Activated CD4-positive, alpha-beta memory T cell treated with anti-CD3 and anti-CD28 coated beads for 36 hours (primary cell): ENCODE measurements at regions of chrX and their contacts with region 1.

Region 1: GRCh38 chrX:104113222-104113965 is 1.1 kb downstream of the ZCCHC18 start:
- DNase-seq: peak; percentile 70
- H3K4me3 Mint-ChIP-seq: peak overlapping the region; percentile 79
- H3K27ac Mint-ChIP-seq: peak overlapping the region; percentile 49
- H3K4me1 Mint-ChIP-seq: peaks cover 44% of the 10 kb centered on the region
- H3K27me3 Mint-ChIP-seq: no peaks in the 10 kb centered on the region

Region 2: GRCh38 chrX:103533511-103534216 is 579.7 kb before region 1 on chrX:
- CTCF ChIA-PET with region 1: no interaction called
- POLR2A ChIA-PET with region 1: no interaction called
- intact Hi-C with region 1: loop called (anchors 5 kb)
- DNase-seq: peak; percentile 76
- H3K4me3 Mint-ChIP-seq: no peak overlapping the region
- H3K27ac Mint-ChIP-seq: no peak overlapping the region
- H3K4me1 Mint-ChIP-seq: peaks cover 3% of the 10 kb centered on the region
- H3K27me3 Mint-ChIP-seq: no peaks in the 10 kb centered on the region

Region 3: DNA sequence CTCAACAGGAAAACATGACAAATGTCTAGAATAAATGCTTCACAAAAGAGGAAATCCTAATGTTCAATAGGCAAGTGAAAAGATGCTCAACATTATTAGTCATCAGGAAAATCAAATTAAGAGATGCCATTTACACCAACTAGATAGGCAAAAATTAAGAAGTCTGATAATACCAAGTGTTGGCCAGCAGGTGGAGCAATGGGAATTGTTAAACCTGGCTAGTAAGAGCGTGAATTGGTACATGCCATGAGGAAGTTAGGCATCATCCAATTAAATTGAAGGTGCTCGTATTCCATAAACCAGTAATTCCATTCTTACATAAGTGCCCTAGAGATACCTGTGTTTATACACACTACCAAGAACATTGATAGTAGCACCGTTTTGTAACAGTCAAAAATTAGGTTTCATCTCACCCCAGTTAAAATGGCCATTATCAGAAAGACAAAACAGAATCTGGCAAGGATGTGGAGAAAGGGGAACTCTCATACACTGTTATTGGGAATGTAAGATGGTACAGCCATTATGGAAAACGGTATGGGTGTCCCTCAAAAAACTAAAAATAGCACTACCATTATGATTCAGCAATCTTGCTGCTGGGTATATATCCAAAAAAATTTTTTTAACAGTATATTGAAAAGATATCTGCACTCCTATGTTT is 15.1 kb before region 1 on chrX:
- CTCF ChIA-PET with region 1: interaction called, 25 read pairs
- POLR2A ChIA-PET with region 1: interaction called, 3 read pairs
- intact Hi-C with region 1: loop called (anchors 1 kb)
- DNase-seq: peak; percentile 48
- H3K4me3 Mint-ChIP-seq: no peak overlapping the region
- H3K27ac Mint-ChIP-seq: no peak overlapping the region
- H3K4me1 Mint-ChIP-seq: peaks cover 2% of the 10 kb centered on the region
- H3K27me3 Mint-ChIP-seq: no peaks in the 10 kb centered on the region